Activated CD4-positive, alpha-beta T cell treated with anti-CD3 and anti-CD28 coated beads for 36 hours (primary cell): ENCODE measurements at regions of chr2 and their contacts with region 1.

Region 1: DNA sequence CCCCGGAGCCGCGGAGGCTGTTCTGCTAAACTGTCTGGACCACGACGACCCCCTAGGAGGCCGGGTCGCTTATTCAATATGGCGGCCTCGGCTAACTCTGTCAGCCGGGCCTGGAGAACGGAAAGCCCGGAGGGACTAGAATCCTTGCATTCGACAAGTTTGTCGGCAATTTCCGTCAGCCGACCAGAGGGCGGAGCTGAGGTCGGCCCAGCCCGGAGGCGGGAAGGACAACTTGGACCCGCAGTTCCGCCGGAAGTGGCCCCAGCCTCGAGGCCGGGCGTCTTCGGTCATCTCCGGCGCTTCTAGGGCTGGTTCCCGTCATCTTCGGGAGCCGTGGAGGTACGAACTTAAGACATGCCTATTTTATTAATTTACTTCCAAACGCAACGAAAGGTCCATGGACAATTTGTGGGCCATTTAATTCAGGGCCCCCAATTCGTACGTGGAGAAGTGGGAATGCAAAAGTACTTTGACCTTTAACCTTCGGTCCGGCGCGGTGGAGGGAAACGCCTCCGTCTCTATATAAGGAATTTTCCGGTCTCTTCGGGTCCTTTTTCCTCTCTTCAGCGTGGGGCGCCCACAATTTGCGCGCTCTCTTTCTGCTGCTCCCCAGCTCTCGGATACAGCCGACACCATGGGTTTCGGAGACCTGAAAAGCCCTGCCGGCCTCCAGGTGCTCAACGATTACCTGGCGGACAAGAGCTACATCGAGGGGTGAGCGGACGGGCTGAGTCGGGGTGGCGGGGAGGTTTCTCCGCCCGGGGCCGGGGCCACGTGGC is at the starts of genes EEF1B2 and NDUFS1:
- DNase-seq: peak; percentile 99
- ATAC-seq: peak; percentile 95
- H3K4me3 Mint-ChIP-seq: peak within 1 kb of the TSS; percentile 97
- H3K27ac Mint-ChIP-seq: peak within 1 kb of the TSS; percentile 89
- H3K4me1 Mint-ChIP-seq: peaks cover 46% of the 10 kb centered on the region
- H3K27me3 Mint-ChIP-seq: no peaks in the 10 kb centered on the region
- total RNA-seq, gene EEF1B2: 983 to 1,166 TPM
- total RNA-seq, gene NDUFS1: 70.6 to 90.4 TPM

Region 2: GRCh38 chr2:206085742-206086445 is 73.6 kb before region 1 on chr2 and contains the start of gene INO80D:
- CTCF ChIA-PET with region 1: interaction called, 5 read pairs
- POLR2A ChIA-PET with region 1: interaction called, 7 read pairs
- intact Hi-C with region 1: loop called (anchors 1 kb)
- DNase-seq: peak; percentile 89
- ATAC-seq: peak; percentile 96
- H3K4me3 Mint-ChIP-seq: peak within 1 kb of the TSS; percentile 96
- H3K27ac Mint-ChIP-seq: peak within 1 kb of the TSS; percentile 99
- H3K4me1 Mint-ChIP-seq: peaks cover 28% of the 10 kb centered on the region
- H3K27me3 Mint-ChIP-seq: no peaks in the 10 kb centered on the region
- total RNA-seq, gene INO80D: 17.6 to 18.9 TPM

Region 3: GRCh38 chr2:206274434-206275268 is 115.1 kb after region 1 on chr2 and contains the start of gene ZDBF2:
- CTCF ChIA-PET with region 1: interaction called, 7 read pairs
- POLR2A ChIA-PET with region 1: no interaction called
- intact Hi-C with region 1: loop called in 1 of 2 experiments (anchors 1 kb)
- DNase-seq: peak; percentile 73
- ATAC-seq: peak; percentile 81
- H3K4me3 Mint-ChIP-seq: peak within 1 kb of the TSS; percentile 84
- H3K27ac Mint-ChIP-seq: peak within 1 kb of the TSS; percentile 90
- H3K4me1 Mint-ChIP-seq: peaks cover 16% of the 10 kb centered on the region
- H3K27me3 Mint-ChIP-seq: peaks cover 43% of the 10 kb centered on the region
- total RNA-seq, gene ZDBF2: 11.7 to 13.4 TPM

Region 4: GRCh38 chr2:206289391-206289790 is 129.9 kb after region 1 on chr2:
- CTCF ChIA-PET with region 1: no interaction called
- POLR2A ChIA-PET with region 1: no interaction called
- intact Hi-C with region 1: no loop called
- DNase-seq: no peak
- ATAC-seq: no peak
- H3K4me3 Mint-ChIP-seq: no peak overlapping the region
- H3K27ac Mint-ChIP-seq: no peak overlapping the region
- H3K4me1 Mint-ChIP-seq: no peaks in the 10 kb centered on the region
- H3K27me3 Mint-ChIP-seq: peaks cover 3% of the 10 kb centered on the region

Region 5: DNA sequence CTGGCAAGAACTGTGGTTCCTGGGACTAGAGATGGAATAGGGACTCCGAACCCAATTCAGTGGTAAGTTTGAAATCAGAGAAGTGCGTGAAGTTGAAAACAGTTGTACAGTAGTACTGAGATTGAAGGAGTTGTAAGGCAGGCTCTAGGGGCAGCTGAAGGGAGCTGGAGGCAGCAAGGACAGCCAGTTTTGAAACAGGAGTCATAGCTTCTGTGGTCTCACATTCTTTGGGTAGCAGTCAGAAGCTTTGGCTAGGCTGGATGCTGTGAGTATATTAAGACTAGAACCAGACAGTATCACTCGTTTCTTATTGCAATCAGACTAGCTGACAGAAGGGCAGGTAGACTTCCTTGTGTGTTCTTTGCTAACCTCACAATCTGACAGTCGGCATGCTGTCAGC is 219.3 kb after region 1 on chr2:
- CTCF ChIA-PET with region 1: no interaction called
- POLR2A ChIA-PET with region 1: no interaction called
- intact Hi-C with region 1: no loop called
- DNase-seq: no peak
- ATAC-seq: no peak
- H3K4me3 Mint-ChIP-seq: no peak overlapping the region
- H3K27ac Mint-ChIP-seq: no peak overlapping the region
- H3K4me1 Mint-ChIP-seq: no peaks in the 10 kb centered on the region
- H3K27me3 Mint-ChIP-seq: peaks cover 12% of the 10 kb centered on the region

Region 6: GRCh38 chr2:206442833-206443734 is 283.5 kb after region 1 on chr2 and contains the start of gene ADAM23:
- CTCF ChIA-PET with region 1: no interaction called
- POLR2A ChIA-PET with region 1: no interaction called
- intact Hi-C with region 1: loop called (anchors 1 to 5 kb)
- DNase-seq: peak; percentile 78
- ATAC-seq: peak; percentile 84
- H3K4me3 Mint-ChIP-seq: peak within 1 kb of the TSS; percentile 77
- H3K27ac Mint-ChIP-seq: no peak within 1 kb of the TSS
- H3K4me1 Mint-ChIP-seq: peaks cover 13% of the 10 kb centered on the region
- H3K27me3 Mint-ChIP-seq: peaks cover 57% of the 10 kb centered on the region
- total RNA-seq, gene ADAM23: 1.1 to 1.3 TPM

Region 7: DNA sequence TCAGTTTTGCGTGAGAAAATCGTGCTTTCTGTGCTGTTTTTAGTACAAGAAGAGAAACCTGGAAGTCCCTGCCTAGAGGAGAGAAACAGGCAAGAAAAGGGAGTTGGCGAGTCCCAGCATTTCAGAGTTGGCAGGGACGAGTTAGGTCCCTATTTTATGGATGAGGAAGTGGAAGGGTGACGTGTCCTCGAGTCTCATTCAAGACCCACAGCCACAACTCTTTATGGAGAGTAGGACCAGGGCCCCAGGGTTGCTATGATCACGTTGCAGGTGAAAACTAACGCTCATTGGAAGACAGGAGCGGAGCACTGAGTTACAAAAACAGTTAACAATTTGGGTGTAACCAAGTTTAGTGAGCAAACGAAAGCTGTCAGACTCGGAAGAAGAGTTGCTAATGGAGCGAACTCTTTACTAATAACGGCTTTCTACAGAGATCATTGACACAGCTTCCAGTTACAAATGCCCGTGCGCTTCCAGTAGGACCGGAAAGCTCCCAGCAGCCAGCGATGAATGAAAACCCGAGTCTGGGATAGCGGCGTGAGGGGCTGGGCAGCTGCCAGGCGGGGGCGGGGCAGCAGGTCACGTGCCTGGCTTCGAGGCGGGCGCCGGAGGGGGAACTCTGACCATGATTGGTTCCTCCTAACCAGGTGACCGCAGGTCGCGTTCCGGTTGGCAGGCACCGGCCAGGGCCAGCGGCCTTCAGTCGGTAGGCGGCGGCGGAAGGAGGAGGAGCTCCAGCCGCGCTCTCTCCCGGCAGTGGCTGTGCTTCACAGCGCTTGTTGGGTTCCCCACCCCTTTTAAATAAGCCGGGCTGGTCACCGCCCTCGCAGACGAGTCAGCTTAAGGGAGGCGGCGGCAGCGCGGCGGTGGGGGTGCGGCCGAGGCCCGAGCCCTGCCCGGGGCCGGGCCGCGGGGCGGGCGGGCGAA is 1551.5 kb after region 1 on chr2 and contains the start of gene CCNYL1:
- CTCF ChIA-PET with region 1: no interaction called
- POLR2A ChIA-PET with region 1: no interaction called
- intact Hi-C with region 1: loop called in 1 of 2 experiments (anchors 1 kb)
- DNase-seq: peak; percentile 99
- ATAC-seq: peak; percentile 99
- H3K4me3 Mint-ChIP-seq: peak within 1 kb of the TSS; percentile 83
- H3K27ac Mint-ChIP-seq: peak within 1 kb of the TSS; percentile 88
- H3K4me1 Mint-ChIP-seq: peaks cover 25% of the 10 kb centered on the region
- H3K27me3 Mint-ChIP-seq: no peaks in the 10 kb centered on the region
- total RNA-seq, gene CCNYL1: 4.0 to 5.5 TPM